Natural killer cell (primary cell): ENCODE measurements at regions of chr4 and their contacts with region 1.

Region 1: DNA sequence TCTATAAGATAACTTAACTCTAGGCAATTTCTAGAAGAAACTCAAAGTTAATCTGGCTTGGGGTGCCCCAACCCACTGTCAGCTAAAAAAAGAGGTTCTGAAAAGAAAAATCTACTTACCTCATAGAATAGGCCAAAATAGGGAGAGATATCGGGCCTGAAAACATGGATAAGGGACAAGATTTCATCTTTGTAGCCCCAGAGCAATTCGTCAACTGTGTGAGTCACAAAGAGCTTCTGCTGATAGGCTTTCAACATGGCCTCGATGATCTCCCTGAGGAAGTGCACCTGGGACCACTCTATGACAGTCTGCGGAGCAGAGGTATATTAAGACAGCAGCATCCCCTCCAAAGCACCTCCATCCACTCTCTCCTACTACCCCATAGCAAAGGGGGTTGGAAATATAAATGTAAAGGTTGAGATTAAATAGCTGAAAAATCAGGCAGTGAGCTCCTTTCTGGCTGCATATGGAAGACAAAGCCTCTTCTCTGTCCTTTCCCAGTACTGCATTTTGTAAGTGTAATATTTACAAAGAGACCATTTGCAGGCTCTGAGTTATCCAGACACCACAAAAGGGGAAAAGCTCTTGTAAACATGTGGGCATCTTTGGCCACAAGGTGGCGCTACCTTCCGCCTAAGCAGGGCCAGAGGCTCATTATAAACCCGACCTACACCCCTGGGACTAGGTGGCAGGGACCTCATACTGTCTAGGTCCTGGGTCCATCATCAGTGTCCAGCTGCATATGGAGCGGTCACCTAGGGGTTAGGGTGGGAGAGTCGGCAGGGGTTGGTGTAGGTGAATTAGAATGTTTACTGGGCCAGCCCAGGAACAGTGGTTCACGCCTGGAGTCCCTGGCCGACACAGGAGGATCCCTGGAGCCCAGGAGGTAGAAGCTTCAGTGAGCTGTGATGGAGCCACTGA is 31.5 kb upstream of the NUP54 start:
- DNase-seq: peak; percentile 76 to 91
- ATAC-seq: peak; percentile 88 to 95 (median 95)
- H3K4me3 ChIP-seq: no peak overlapping the region
- H3K4me3 Mint-ChIP-seq: no peak overlapping the region
- H3K27ac ChIP-seq: no peak overlapping the region
- H3K27ac Mint-ChIP-seq: no peak overlapping the region
- H3K4me1 ChIP-seq: no peaks in the 10 kb centered on the region
- H3K4me1 Mint-ChIP-seq: peaks cover 0 to 8% of the 10 kb centered on the region in 2 donors
- H3K27me3 ChIP-seq: no peaks in the 10 kb centered on the region
- H3K27me3 Mint-ChIP-seq: no peaks in the 10 kb centered on the region
- CTCF ChIP-seq: peak; percentile 89

Region 2: GRCh38 chr4:75916091-75916661 is 263.5 kb before region 1 on chr4:
- intact Hi-C with region 1: no loop called
- DNase-seq: peak; percentile 42 to 68
- ATAC-seq: peak; percentile 72 to 87 (median 75)
- H3K4me3 ChIP-seq: no peak overlapping the region
- H3K4me3 Mint-ChIP-seq: no peak overlapping the region
- H3K27ac ChIP-seq: no peak overlapping the region
- H3K27ac Mint-ChIP-seq: no peak overlapping the region
- H3K4me1 ChIP-seq: no peaks in the 10 kb centered on the region
- H3K4me1 Mint-ChIP-seq: no peaks in the 10 kb centered on the region
- H3K27me3 ChIP-seq: no peaks in the 10 kb centered on the region
- H3K27me3 Mint-ChIP-seq: no peaks in the 10 kb centered on the region
- CTCF ChIP-seq: peak; percentile 82

Region 3: GRCh38 chr4:76377911-76378310 is 198.3 kb after region 1 on chr4:
- intact Hi-C with region 1: loop called (anchors 1 kb)
- DNase-seq: peak; percentile 24 to 69
- ATAC-seq: peak; percentile 36 to 70 (median 58)
- H3K4me3 ChIP-seq: no peak overlapping the region
- H3K4me3 Mint-ChIP-seq: no peak overlapping the region
- H3K27ac ChIP-seq: no peak overlapping the region
- H3K27ac Mint-ChIP-seq: no peak overlapping the region
- H3K4me1 ChIP-seq: no peaks in the 10 kb centered on the region
- H3K4me1 Mint-ChIP-seq: peaks cover 0 to 5% of the 10 kb centered on the region in 2 donors
- H3K27me3 ChIP-seq: no peaks in the 10 kb centered on the region
- H3K27me3 Mint-ChIP-seq: peaks cover 0 to 6% of the 10 kb centered on the region in 2 donors
- CTCF ChIP-seq: peak; percentile 57

Region 4: DNA sequence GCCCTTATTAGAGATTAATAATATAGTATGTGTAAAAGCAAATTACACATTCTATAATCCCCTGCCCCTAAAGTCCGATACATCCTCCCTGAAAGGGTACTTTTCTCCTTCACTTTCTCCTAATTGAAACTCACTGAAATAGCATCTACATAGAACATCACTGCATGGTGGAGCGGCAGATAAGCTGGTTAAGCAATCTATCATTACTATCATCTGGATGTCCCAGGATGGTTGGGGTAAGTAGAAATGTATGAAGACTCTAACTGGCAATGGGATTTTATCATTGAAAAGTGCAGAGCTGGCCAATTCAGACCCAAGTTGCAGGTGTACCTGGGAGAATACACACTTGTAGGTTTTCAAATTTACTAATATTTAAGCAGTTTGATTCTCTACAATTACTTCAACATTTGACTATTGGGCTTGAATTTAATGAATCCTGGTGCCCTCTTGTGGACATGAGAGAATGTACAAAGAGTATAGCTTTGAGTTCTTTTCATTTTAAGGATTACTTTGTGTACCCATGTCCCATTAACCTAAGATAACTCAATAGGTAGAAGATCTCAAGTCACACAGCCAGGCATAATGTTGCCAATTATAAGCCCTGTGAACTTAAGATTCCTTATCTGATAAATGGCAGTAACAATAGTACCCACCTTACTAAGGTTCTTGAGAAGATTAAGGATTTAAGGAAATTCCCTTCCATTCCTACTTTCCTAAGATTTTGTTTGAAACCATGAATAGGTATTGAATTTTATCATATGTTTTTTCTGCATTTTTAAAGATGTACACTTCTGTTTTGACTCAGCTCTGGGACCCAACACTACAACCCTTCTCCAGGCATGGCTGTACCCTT is 325.2 kb after region 1 on chr4:
- intact Hi-C with region 1: loop called (anchors 1 kb)
- DNase-seq: peak in 1 of 2 donors; percentile 61
- ATAC-seq: peak; percentile 53 to 65 (median 55)
- H3K4me3 ChIP-seq: no peak overlapping the region
- H3K4me3 Mint-ChIP-seq: no peak overlapping the region
- H3K27ac ChIP-seq: no peak overlapping the region
- H3K27ac Mint-ChIP-seq: no peak overlapping the region
- H3K4me1 ChIP-seq: no peaks in the 10 kb centered on the region
- H3K4me1 Mint-ChIP-seq: no peaks in the 10 kb centered on the region
- H3K27me3 ChIP-seq: no peaks in the 10 kb centered on the region
- H3K27me3 Mint-ChIP-seq: peaks cover 0 to 6% of the 10 kb centered on the region in 2 donors
- CTCF ChIP-seq: peak; percentile 76